ENCODE measurements at regions of chr3 and their contacts with region 1.

Region 1: DNA sequence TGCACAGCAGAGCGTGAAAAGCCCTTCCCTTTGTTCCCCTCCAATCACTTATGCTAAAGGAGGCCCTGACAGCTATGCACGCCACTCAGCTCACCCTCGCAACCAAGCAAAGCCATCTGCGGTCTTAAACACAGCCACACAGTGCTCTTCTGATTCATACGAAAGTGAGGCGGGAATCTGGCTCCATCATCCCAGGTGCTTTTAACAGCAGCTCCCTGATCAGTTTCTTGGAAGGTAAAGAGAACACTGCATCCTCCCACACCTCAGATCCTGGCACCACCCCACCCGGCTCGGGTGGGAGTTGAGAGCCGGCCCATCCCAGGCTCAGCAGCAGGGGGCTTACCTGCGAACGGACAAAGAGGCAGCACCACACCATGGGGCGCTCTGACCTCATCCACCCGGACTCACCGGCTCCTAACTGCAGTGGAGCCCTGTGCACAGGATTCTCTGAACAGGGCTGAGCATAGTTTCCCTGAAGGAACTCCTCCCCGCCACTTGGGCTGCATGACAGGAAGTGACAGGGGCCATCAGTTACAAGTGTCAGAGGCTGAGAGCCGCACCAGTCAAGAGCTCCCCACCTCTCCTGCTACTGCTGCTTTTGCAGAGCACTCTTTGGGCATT is 114.3 kb upstream of the ARHGEF3 start:
- DNase-seq: peak; percentile 33 to 82 (median 76)
- ATAC-seq: peak; percentile 94
- H3K4me3 ChIP-seq: peak overlapping the region; percentile 97
- H3K4me3 Mint-ChIP-seq: peak overlapping the region; percentile 89 to 98 (median 94)
- H3K27ac ChIP-seq: peak overlapping the region; percentile 81
- H3K27ac Mint-ChIP-seq: peak overlapping the region; percentile 92 to 99 (median 98)
- H3K4me1 ChIP-seq: peaks cover 42 to 47% of the 10 kb centered on the region in 2 donors
- H3K4me1 Mint-ChIP-seq: peaks cover 54 to 86% (median 83%) of the 10 kb centered on the region in 7 donors
- H3K27me3 ChIP-seq: no peaks in the 10 kb centered on the region
- H3K27me3 Mint-ChIP-seq: no peaks in the 10 kb centered on the region

Region 2: DNA sequence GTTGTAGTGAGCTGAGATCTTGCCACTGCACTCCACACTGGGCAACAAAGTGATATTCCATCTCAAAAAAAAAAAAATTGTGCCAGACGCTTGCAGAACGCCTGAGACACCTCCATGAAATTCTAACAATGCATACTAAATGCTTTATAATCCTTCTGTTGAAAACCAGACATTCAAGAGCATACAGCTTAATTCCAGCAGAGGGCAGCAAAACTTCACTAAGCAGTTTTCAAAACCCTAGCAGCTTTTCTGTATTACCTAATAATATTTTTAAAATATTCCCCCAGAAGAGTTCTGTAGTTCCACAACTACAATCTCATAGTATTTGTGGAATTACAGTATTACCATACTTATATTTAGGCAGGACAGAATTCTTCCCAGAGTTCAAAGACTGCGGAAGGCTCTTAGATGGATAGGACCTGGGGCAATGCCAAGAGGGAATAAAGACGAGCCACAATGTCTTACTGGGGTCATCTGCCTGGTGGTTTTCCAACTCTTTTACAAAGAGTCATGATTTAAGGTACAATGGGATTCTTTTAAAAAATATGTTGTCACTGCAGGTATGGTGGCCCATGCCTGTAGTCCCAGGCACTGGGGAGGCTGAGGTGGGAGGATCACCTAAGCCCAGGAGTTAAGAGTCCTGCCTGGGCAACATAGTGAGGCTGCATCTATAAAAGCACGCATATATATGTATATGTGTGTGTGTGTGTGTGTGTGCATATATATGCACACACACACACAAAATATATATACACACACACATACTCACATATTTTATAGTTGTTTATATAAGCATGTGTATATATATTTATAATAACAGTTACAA is 213.4 kb before region 1 on chr3:
- CTCF ChIA-PET with region 1: interaction called, 9 read pairs
- POLR2A ChIA-PET with region 1: no interaction called
- intact Hi-C with region 1: loop called (anchors 1 to 2 kb)
- DNase-seq: peak in 7 of 9 donors; percentile 52 to 75 (median 67)
- ATAC-seq: peak; percentile 86
- H3K4me3 ChIP-seq: no peak overlapping the region
- H3K4me3 Mint-ChIP-seq: no peak overlapping the region
- H3K27ac ChIP-seq: no peak overlapping the region
- H3K27ac Mint-ChIP-seq: peak overlapping the region in 2 of 9 donors; percentile 1 to 22
- H3K4me1 ChIP-seq: peaks cover 3 to 11% of the 10 kb centered on the region in 2 donors
- H3K4me1 Mint-ChIP-seq: peaks cover 15 to 35% (median 24%) of the 10 kb centered on the region in 7 donors
- H3K27me3 ChIP-seq: no peaks in the 10 kb centered on the region
- H3K27me3 Mint-ChIP-seq: no peaks in the 10 kb centered on the region

Region 3: DNA sequence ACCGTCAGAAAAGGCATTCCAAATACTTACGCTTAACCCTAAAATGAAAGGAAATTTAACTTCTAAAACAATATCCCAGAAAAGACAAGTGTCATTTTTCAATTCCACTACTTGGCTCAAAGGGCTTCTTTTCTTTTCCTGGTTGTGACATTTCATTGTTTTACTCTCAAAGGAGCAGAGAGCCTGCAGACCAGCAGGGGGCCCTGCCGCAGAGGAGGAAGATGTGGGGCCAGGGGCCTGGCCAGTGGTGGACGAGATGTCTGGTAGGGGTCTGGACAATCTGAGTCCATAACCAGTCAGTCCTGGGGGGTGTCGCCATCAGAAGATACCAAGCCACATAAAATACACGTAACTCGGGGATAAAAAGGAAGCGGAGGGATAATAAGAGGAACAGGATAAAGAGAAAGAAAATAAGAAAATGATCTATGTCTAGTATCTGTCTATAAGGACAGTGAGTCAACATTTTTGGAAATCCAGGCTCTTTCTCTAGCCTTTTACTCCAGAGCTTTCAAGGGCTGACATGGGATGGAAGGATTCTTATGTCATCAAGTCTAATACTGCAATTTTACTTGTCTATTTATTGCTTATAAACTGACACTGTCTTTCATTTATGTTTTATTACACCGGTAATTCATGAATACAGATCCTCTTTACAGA is 60.1 kb before region 1 on chr3:
- CTCF ChIA-PET with region 1: interaction called, 5 read pairs
- POLR2A ChIA-PET with region 1: interaction called, 4 read pairs
- intact Hi-C with region 1: loop called in 1 of 2 experiments (anchors 1 kb)
- DNase-seq: peak in 2 of 9 donors; percentile 12 to 35
- ATAC-seq: peak; percentile 50
- H3K4me3 ChIP-seq: no peak overlapping the region
- H3K4me3 Mint-ChIP-seq: no peak overlapping the region
- H3K27ac ChIP-seq: no peak overlapping the region
- H3K27ac Mint-ChIP-seq: peak overlapping the region in 6 of 9 donors; percentile 4 to 78 (median 44)
- H3K4me1 ChIP-seq: peaks cover 6 to 9% of the 10 kb centered on the region in 2 donors
- H3K4me1 Mint-ChIP-seq: peaks cover 34 to 63% (median 55%) of the 10 kb centered on the region in 7 donors
- H3K27me3 ChIP-seq: no peaks in the 10 kb centered on the region
- H3K27me3 Mint-ChIP-seq: no peaks in the 10 kb centered on the region

Region 4: DNA sequence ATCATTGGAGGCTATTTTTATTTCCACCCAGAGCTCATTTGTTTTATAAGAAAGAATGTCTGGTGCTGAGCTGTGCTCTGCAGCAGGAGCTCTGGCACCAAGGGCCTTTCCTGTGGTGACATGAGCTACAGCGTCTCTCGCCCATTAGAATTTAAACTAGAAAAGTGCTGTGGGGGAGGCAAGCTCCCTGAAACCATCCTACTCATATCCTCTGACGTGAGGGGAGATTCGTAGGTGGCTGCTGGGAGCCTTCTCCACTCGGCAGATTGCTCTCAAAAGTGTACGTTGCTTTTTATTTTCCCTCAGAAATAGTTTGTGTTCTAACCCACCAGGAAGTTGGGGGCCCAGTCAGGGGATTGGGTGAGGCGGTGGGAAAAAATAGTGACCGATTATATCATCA is 38.0 kb before region 1 on chr3:
- CTCF ChIA-PET with region 1: no interaction called
- POLR2A ChIA-PET with region 1: interaction called, 10 read pairs
- intact Hi-C with region 1: loop called (anchors 1 to 5 kb)
- DNase-seq: peak in 7 of 9 donors; percentile 29 to 65 (median 49)
- ATAC-seq: peak; percentile 84
- H3K4me3 ChIP-seq: no peak overlapping the region
- H3K4me3 Mint-ChIP-seq: peak overlapping the region; percentile 48 to 85 (median 73)
- H3K27ac ChIP-seq: peak overlapping the region; percentile 57
- H3K27ac Mint-ChIP-seq: peak overlapping the region; percentile 79 to 95 (median 91)
- H3K4me1 ChIP-seq: peaks cover 10 to 57% of the 10 kb centered on the region in 2 donors
- H3K4me1 Mint-ChIP-seq: peaks cover 33 to 88% (median 78%) of the 10 kb centered on the region in 7 donors
- H3K27me3 ChIP-seq: no peaks in the 10 kb centered on the region
- H3K27me3 Mint-ChIP-seq: no peaks in the 10 kb centered on the region

Region 5: DNA sequence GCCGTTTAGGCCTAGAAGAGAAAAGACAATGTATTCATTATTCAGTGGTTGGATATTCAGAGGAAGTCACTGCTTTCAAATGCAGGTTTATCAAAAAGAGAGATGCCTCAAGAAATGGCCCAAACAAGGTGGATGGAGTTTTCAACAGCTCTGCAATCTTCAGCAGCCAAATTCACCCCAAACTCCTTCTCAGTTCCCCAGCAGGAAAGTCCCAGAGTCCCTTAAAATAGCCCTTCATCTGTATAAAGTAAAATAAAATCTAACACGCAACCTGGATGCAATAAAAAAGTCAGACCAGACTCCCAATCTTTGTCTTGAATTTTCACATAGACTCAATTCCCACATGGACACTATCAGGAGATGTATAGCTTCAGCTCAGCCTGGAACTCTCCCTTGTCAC is 42.8 kb after region 1 on chr3:
- CTCF ChIA-PET with region 1: interaction called, 4 read pairs
- POLR2A ChIA-PET with region 1: interaction called, 12 read pairs
- intact Hi-C with region 1: no loop called
- DNase-seq: no peak
- ATAC-seq: no peak
- H3K4me3 ChIP-seq: no peak overlapping the region
- H3K4me3 Mint-ChIP-seq: no peak overlapping the region
- H3K27ac ChIP-seq: no peak overlapping the region
- H3K27ac Mint-ChIP-seq: peak overlapping the region in 1 of 9 donors; percentile 32
- H3K4me1 ChIP-seq: no peaks in the 10 kb centered on the region
- H3K4me1 Mint-ChIP-seq: peaks cover 0 to 4% (median 0%) of the 10 kb centered on the region in 7 donors
- H3K27me3 ChIP-seq: no peaks in the 10 kb centered on the region
- H3K27me3 Mint-ChIP-seq: peaks cover 0 to 2% (median 0%) of the 10 kb centered on the region in 5 donors

Region 6: GRCh38 chr3:56976651-56977560 is 60.8 kb after region 1 on chr3:
- CTCF ChIA-PET with region 1: no interaction called
- POLR2A ChIA-PET with region 1: no interaction called
- intact Hi-C with region 1: no loop called
- DNase-seq: no peak
- ATAC-seq: no peak
- H3K4me3 ChIP-seq: no peak overlapping the region
- H3K4me3 Mint-ChIP-seq: no peak overlapping the region
- H3K27ac ChIP-seq: no peak overlapping the region
- H3K27ac Mint-ChIP-seq: peak overlapping the region in 1 of 9 donors; percentile 21
- H3K4me1 ChIP-seq: no peaks in the 10 kb centered on the region
- H3K4me1 Mint-ChIP-seq: peaks cover 0 to 13% (median 0%) of the 10 kb centered on the region in 7 donors
- H3K27me3 ChIP-seq: no peaks in the 10 kb centered on the region
- H3K27me3 Mint-ChIP-seq: no peaks in the 10 kb centered on the region